Head of caudate nucleus (tissue), 42 donors: ENCODE measurements at regions of chr10 and their contacts with region 1.

Region 1: GRCh38 chr10:22615819-22616499 is 98.4 kb downstream of the PIP4K2A start:
- DNase-seq: peak; percentile 79 to 97 (median 90)

Region 2: DNA sequence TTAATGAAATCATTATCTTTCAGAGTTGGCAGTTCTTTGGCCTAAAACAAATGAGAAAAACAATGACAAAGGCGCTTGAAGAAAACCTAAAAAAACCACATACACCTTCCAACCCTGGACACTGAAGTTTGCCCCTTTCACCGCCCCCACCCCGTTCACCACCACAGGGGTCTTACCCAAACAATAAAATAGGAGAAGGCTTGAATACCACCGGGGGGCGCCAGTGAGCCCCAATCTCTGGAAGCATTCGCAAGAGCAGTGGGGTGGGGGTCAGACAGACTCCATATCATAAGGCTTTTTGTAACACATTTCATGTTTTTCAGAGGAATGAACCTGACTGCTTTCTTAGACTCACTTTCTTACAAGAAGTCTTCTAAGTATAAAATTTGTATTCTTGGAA is 65.2 kb before region 1 on chr10:
- intact Hi-C with region 1: no loop called
- DNase-seq: peak in 38 of 42 donors; percentile 23 to 86 (median 60)

Region 3: GRCh38 chr10:22714479-22715289 is 98.7 kb after region 1 on chr10 and contains the start of gene PIP4K2A:
- intact Hi-C with region 1: loop called (anchors 5 kb)
- DNase-seq: peak in 40 of 42 donors; percentile 56 to 91 (median 82)

Region 4: GRCh38 chr10:22849077-22849805 is 233.3 kb after region 1 on chr10:
- intact Hi-C with region 1: loop called (anchors 5 kb)
- DNase-seq: peak; percentile 80 to 98 (median 94)

Region 5: GRCh38 chr10:22978287-22978686 is 362.3 kb after region 1 on chr10:
- intact Hi-C with region 1: loop called (anchors 10 kb)
- DNase-seq: no peak